Activated naive CD4-positive, alpha-beta T cell treated with anti-CD3 and anti-CD28 coated beads for 36 hours (primary cell): ENCODE measurements at regions of chr18 and their contacts with region 1.

Region 1: DNA sequence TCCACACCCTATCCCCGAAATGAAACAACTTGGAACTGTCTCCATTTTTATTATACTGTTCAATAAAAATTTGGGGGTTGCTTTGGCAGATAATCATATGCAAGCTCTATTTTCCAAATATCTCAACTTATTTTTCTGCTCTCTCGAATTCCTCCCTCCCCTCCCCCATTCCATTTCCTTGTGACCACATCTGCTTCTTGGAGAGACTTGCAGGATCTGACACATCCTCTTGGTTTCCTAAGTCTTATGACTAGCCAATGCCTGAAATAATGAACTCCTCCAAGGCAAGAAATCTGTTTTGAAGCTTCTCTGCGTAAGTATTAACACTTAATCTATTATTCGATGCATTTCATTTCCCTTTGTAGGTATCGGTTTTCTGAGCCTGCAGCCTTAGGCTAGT is 16.1 kb downstream of the TGIF1 start:
- DNase-seq: no peak
- H3K4me3 Mint-ChIP-seq: no peak overlapping the region
- H3K27ac Mint-ChIP-seq: no peak overlapping the region
- H3K4me1 Mint-ChIP-seq: peaks cover 29% of the 10 kb centered on the region
- H3K27me3 Mint-ChIP-seq: no peaks in the 10 kb centered on the region

Region 2: DNA sequence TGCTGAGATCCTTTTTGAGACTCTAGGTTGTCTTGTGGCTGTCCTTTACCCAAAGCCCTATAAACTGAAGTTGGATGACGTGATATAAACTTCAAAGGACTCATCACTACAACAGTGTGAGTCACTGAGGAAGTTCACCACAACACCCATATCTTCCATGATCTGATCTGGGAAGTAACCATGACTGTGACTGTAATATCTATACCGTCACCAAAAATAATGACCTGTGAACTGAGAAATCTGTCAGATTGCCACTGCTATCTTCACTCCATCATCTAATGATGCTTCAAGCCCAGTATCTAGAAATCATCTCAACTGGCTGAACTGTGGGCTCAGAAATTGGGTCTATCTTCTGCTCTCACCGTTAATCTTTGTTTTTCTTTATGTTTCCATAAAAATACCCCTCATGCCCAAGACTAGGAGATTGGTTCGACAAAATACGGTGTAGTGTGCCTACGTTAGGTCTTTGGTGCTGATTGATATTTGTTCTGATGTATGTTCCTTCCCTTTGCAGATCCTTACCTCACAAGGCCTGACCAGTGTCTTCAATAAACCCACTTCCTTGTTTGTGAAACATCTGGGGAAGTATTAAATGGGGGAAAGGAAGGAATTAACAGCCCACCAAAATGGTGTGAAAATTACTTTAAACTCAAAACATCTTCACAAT is 125.9 kb before region 1 on chr18:
- CTCF ChIA-PET with region 1: no interaction called
- intact Hi-C with region 1: no loop called
- DNase-seq: peak; percentile 26
- H3K4me3 Mint-ChIP-seq: no peak overlapping the region
- H3K27ac Mint-ChIP-seq: peak overlapping the region; percentile 62
- H3K4me1 Mint-ChIP-seq: peaks cover 25% of the 10 kb centered on the region
- H3K27me3 Mint-ChIP-seq: no peaks in the 10 kb centered on the region

Region 3: DNA sequence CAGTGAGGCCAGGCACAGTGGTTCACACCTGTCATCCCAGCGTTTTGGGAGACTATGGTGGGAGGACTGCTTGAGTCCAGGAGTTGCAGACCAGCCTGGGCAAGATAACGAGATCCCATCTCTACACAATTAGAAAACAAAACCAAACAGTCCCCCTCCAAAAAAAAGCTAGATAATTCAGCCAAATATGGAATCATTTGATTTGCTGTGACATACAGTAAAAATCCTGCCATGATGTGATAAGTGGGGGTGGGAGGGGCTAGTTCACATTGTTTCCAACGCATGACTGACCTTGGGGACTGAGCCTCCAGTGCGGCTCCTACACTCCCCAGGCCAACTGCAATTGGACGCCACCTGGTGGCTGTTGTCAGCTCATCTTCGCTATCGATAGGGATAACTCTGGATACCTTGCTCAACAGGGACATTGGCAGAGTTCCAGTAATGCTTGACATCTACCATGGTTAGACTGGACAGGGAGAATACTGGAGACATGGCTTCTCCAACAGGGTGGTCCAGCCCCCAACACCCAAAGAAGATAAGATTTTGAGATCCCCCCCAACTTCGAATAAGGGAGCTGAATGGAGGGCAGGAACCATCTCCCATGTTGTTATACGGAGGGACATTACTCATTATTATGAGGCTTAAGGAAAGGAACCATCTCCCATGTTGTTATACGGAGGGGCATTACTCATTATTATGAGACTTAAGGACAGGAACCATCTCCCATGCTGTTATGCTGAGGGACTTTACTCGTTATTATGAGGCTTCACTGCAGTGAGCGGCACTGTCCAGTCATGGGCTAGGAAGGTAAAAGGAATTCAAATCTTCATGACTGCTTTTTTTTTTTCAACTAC is 119.8 kb after region 1 on chr18:
- CTCF ChIA-PET with region 1: interaction called, 16 read pairs
- intact Hi-C with region 1: no loop called
- DNase-seq: peak; percentile 88
- H3K4me3 Mint-ChIP-seq: no peak overlapping the region
- H3K27ac Mint-ChIP-seq: peak overlapping the region; percentile 1
- H3K4me1 Mint-ChIP-seq: peaks cover 36% of the 10 kb centered on the region
- H3K27me3 Mint-ChIP-seq: no peaks in the 10 kb centered on the region